Activated B cell treated with CpG ODN at 0.5 μM for 24 hours (primary cell): ENCODE measurements at regions of chr15 and their contacts with region 1.

Region 1: GRCh38 chr15:59656897-59657634 is at the start of gene GTF2A2:
- DNase-seq: peak; percentile 91
- ATAC-seq: peak; percentile 100
- H3K4me3 Mint-ChIP-seq: no peak within 1 kb of the TSS
- H3K27ac Mint-ChIP-seq: peak within 1 kb of the TSS; percentile 82
- H3K4me1 Mint-ChIP-seq: peaks cover 14% of the 10 kb centered on the region
- H3K27me3 Mint-ChIP-seq: no peaks in the 10 kb centered on the region
- CTCF ChIP-seq: no peak
- total RNA-seq, gene GTF2A2: 77.4 and 95.2 TPM in 2 replicates

Region 2: DNA sequence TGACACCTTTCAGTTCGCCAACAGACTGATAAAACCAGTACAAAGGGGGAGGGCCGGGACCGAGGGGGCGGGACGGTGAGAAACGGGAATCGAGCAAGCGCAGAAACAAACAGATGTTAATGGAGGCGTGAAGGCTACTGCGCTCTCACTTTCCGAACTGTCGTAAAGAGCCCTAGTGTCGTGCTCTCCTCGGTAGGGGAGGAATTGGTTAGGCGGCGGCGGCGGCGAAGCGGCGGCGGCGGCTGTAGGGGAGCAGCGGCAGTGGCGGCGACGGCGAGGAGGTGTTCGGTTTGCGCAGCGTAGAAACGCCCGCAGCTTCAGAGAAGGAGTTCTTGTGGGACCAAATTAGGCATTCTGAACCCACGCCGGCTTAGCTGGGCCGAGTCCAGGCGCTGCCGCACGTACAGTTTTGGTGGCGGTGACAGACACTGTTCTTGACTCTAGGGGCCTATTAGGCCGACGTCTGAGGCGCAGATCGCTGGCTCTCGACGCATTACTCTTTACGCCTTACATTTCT is 669.5 kb before region 1 on chr15 and contains the start of gene RNF111:
- CTCF ChIA-PET with region 1: no interaction called
- POLR2A ChIA-PET with region 1: no interaction called
- intact Hi-C with region 1: loop called (anchors 5 kb)
- DNase-seq: peak; percentile 78
- ATAC-seq: peak; percentile 91
- H3K4me3 Mint-ChIP-seq: peak within 1 kb of the TSS; percentile 95
- H3K27ac Mint-ChIP-seq: peak within 1 kb of the TSS; percentile 94
- H3K4me1 Mint-ChIP-seq: peaks cover 45% of the 10 kb centered on the region
- H3K27me3 Mint-ChIP-seq: no peaks in the 10 kb centered on the region
- CTCF ChIP-seq: no peak
- total RNA-seq, gene RNF111: 52.5 and 55.8 TPM in 2 replicates

Region 3: GRCh38 chr15:59615661-59616060 is 41.4 kb before region 1 on chr15:
- CTCF ChIA-PET with region 1: no interaction called
- POLR2A ChIA-PET with region 1: no interaction called
- intact Hi-C with region 1: loop called (anchors 1 kb)
- DNase-seq: no peak
- ATAC-seq: no peak
- H3K4me3 Mint-ChIP-seq: no peak overlapping the region
- H3K27ac Mint-ChIP-seq: no peak overlapping the region
- H3K4me1 Mint-ChIP-seq: peaks cover 19% of the 10 kb centered on the region
- H3K27me3 Mint-ChIP-seq: peaks cover 25% of the 10 kb centered on the region
- CTCF ChIP-seq: no peak